Activated B cell treated with CpG ODN at 0.5 μM for 24 hours (primary cell): ENCODE measurements at regions of chr6 and their contacts with region 1.

Region 1: DNA sequence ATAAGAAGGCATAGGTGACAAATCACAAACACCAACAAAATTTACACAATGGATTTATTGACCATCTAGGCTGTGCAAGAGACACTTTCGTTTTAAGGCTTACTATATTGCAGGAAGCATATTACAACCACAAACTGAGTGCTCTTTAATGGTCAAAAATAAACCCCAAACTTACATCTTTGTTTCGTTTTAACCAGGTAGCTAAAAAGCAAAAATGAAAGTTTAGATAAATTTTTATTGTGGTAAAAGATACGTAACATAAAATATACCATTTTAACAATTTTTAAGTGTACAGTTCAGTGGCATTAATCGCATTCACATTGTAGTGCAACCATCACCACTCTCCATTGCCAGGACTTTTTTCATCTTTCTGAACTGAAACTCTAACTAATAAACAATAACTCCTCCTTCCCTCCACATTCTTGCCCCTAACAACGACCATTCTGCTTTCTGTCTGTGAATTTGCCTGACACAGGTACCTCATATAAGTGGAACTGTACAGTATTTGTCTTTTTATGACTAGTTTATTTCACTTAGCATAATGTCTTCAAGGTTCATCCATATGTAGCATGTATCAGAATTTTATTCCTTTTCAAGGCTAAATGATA is 32.3 kb upstream of the DUSP22 start:
- DNase-seq: no peak
- ATAC-seq: peak; percentile 34
- H3K4me3 Mint-ChIP-seq: peak overlapping the region; percentile 11
- H3K27ac Mint-ChIP-seq: peak overlapping the region; percentile 19
- H3K4me1 Mint-ChIP-seq: peaks cover 80% of the 10 kb centered on the region
- H3K27me3 Mint-ChIP-seq: no peaks in the 10 kb centered on the region
- CTCF ChIP-seq: no peak

Region 2: GRCh38 chr6:247351-247750 is 12.7 kb before region 1 on chr6:
- CTCF ChIA-PET with region 1: no interaction called
- POLR2A ChIA-PET with region 1: interaction called, 3 read pairs
- intact Hi-C with region 1: loop called (anchors 1 kb)
- DNase-seq: no peak
- ATAC-seq: no peak
- H3K4me3 Mint-ChIP-seq: no peak overlapping the region
- H3K27ac Mint-ChIP-seq: no peak overlapping the region
- H3K4me1 Mint-ChIP-seq: peaks cover 43% of the 10 kb centered on the region
- H3K27me3 Mint-ChIP-seq: no peaks in the 10 kb centered on the region
- CTCF ChIP-seq: no peak

Region 3: GRCh38 chr6:273551-274058 is 13.6 kb after region 1 on chr6:
- CTCF ChIA-PET with region 1: no interaction called
- POLR2A ChIA-PET with region 1: interaction called, 3 read pairs
- intact Hi-C with region 1: loop called (anchors 2 kb)
- DNase-seq: no peak
- ATAC-seq: no peak
- H3K4me3 Mint-ChIP-seq: no peak overlapping the region
- H3K27ac Mint-ChIP-seq: no peak overlapping the region
- H3K4me1 Mint-ChIP-seq: peaks cover 40% of the 10 kb centered on the region
- H3K27me3 Mint-ChIP-seq: no peaks in the 10 kb centered on the region
- CTCF ChIP-seq: no peak

Region 4: DNA sequence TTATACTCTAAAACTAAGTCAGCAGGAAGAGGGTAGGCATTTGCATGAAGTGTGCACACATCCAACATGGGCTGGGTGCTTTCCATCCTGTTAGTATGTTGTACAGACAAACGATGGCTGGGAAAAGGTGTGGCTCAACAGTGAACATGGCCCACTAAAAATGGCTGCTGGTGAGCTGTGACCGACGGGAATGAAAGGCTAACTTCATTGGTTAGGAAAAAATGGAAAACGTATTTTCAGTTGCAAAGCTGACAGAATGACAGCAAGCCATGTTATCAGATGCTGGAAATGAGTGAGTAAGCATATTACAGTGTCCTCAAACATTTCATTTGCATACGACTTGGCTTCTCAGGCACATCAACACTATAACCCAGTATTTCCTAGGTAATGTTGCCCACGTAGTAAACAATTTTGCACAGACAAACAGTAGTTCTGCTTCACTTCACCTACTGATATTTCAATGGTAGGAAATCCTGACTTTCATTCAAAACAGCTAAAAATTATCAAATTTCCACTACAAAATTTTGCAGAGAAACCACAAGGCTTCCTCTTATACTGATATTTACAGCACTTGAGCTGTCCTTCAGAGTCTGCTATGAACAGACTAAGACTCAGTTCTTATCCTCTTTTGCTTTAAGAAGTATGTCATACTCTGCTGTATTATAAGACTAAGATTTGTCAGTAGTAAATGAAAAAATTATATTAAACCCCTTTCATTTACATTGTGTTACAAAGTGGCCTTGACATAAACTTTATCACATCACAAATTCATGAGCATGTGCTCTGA is 230.4 kb after region 1 on chr6:
- CTCF ChIA-PET with region 1: no interaction called
- POLR2A ChIA-PET with region 1: no interaction called
- intact Hi-C with region 1: no loop called
- DNase-seq: no peak
- ATAC-seq: peak; percentile 35
- H3K4me3 Mint-ChIP-seq: peak overlapping the region; percentile 65
- H3K27ac Mint-ChIP-seq: peak overlapping the region; percentile 92
- H3K4me1 Mint-ChIP-seq: peaks cover 64% of the 10 kb centered on the region
- H3K27me3 Mint-ChIP-seq: no peaks in the 10 kb centered on the region
- CTCF ChIP-seq: no peak